MCF 10A (cell line): ENCODE measurements at regions of chr12 and their contacts with region 1.

Region 1: DNA sequence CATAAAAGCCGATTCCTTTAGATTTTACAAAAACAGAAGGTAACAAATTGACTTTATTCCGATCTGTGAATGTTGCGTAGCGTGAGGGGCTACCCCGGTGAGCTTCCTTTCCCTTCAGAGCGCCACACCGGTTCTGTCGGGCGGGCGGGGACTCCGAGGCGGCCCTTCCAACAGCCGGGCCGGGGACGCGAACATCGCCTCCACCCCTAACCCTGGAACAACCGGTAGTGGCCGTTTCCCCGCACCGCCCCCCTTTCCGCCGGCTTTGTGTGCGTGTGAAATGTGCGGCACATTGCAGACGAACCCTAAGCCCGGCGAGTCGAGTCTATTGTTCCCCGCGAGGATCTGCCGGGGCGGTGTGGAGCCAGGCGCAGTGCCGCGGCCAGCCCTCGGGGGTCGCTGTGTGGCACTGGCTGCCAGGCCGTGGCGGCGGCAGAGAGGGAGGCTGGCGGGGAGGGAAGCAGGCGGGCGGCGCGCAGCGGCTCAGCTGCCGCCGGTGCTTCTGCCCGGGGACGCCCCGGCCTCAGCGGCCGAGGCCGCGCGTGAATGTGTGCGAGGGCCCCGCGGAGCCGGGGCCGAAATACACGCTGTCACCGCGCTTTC is 775 bp upstream of the ARID2 start:
- DNase-seq: peak; percentile 95
- H3K4me3 Mint-ChIP-seq: peak overlapping the region; percentile 81
- H3K27ac Mint-ChIP-seq: peak overlapping the region; percentile 99
- H3K4me1 Mint-ChIP-seq: peaks cover 14% of the 10 kb centered on the region
- H3K27me3 Mint-ChIP-seq: no peaks in the 10 kb centered on the region
- CTCF ChIP-seq: peak; percentile 86

Region 2: DNA sequence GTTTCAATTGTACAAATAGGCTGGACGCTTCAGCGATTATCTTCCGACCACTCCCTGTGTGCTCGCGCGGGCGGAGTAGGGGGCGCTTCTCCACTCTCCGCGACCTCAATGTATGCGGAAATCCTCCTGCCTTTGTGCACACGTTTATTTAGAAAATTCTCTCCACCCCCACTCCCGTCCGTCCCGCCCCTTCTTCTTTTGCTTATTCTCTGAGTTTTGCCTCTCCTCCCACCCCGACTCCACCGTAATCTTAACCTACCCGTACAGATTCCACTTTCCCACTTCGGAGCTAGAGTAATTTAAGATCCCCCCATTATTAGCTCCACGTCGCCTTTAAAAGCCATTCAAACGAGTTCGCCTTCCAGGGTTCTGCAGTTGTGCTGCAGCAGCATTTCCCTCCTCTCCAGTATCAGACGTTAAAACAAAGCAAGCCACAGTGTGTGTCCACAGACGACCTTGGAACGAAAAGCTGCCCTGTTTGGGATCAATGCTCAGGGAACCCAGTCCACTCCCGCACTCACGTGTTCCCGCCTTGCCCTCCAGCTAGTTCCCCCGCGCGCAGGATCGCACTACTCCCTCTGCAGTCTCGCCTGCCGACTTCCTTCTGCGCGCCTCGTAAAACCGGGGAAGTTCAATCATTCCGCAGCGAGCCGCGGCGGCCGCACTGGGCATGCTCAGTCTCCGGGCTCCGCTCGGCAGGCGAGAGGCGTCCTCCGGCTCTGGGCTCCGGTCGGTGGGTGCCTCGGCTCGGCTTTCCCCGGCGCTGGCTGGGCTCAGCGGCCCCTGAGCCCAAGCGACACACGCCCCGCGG is 513.1 kb before region 1 on chr12 and contains the start of gene ANO6:
- CTCF ChIA-PET with region 1: interaction called, 11 read pairs
- POLR2A ChIA-PET with region 1: interaction called, 143 read pairs
- intact Hi-C with region 1: loop called (anchors 2 kb)
- DNase-seq: peak; percentile 88
- H3K4me3 Mint-ChIP-seq: peak within 1 kb of the TSS; percentile 89
- H3K27ac Mint-ChIP-seq: peak within 1 kb of the TSS; percentile 99
- H3K4me1 Mint-ChIP-seq: peaks cover 21% of the 10 kb centered on the region
- H3K27me3 Mint-ChIP-seq: no peaks in the 10 kb centered on the region
- CTCF ChIP-seq: no peak
- total RNA-seq, gene ANO6: 25.4 and 31.8 TPM in 2 replicates

Region 3: DNA sequence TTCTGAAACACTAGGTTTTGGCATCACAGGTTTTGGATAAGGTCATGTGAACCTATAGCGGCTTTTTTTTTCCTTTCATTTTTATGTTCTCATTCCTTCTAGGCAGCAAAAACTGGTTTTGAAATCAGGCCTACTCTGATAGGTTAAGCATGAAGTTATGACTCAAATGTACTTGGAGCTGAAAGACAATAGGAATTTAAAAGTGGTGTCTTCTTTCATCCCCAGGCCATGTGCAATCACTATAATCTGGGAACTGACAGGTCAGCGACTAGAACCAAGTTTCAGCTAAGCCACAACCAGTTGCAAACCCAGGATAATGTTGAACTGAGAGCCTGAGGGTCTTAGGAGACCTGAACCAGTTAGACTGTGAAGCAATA is 438.5 kb before region 1 on chr12:
- CTCF ChIA-PET with region 1: interaction called, 3 read pairs
- POLR2A ChIA-PET with region 1: interaction called, 11 read pairs
- intact Hi-C with region 1: no loop called
- DNase-seq: peak; percentile 94
- H3K4me3 Mint-ChIP-seq: peak overlapping the region; percentile 18
- H3K27ac Mint-ChIP-seq: peak overlapping the region; percentile 54
- H3K4me1 Mint-ChIP-seq: peaks cover 18% of the 10 kb centered on the region
- H3K27me3 Mint-ChIP-seq: no peaks in the 10 kb centered on the region
- CTCF ChIP-seq: no peak

Region 4: DNA sequence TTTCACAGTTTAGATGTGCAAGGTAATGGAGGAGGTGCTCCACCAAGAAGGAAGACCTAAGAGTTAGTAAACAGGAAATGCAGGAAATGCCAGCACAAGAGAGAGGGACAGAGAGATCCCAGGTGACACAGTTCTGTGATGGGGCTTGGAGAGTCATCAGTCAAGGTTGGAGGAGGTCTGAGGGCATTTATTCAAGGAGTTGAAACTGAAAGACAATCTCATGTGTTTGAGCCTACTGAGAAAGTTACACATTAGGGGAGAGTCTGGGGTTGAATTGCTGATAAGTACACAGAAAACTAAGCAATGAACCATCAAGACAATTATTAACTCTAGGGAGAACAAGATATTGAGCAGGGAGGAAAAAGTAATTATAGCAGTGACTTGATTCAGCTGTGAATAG is 374.3 kb before region 1 on chr12:
- CTCF ChIA-PET with region 1: no interaction called
- POLR2A ChIA-PET with region 1: no interaction called
- intact Hi-C with region 1: no loop called
- DNase-seq: no peak
- H3K4me3 Mint-ChIP-seq: no peak overlapping the region
- H3K27ac Mint-ChIP-seq: peak overlapping the region; percentile 24
- H3K4me1 Mint-ChIP-seq: peaks cover 5% of the 10 kb centered on the region
- H3K27me3 Mint-ChIP-seq: no peaks in the 10 kb centered on the region
- CTCF ChIP-seq: no peak

Region 5: GRCh38 chr12:45587877-45588533 is 140.7 kb before region 1 on chr12:
- CTCF ChIA-PET with region 1: interaction called, 3 read pairs
- POLR2A ChIA-PET with region 1: interaction called, 4 read pairs
- intact Hi-C with region 1: loop called (anchors 1 kb)
- DNase-seq: peak; percentile 15
- H3K4me3 Mint-ChIP-seq: no peak overlapping the region
- H3K27ac Mint-ChIP-seq: no peak overlapping the region
- H3K4me1 Mint-ChIP-seq: no peaks in the 10 kb centered on the region
- H3K27me3 Mint-ChIP-seq: no peaks in the 10 kb centered on the region
- CTCF ChIP-seq: no peak

Region 6: GRCh38 chr12:45745861-45746277 is 17.1 kb after region 1 on chr12:
- CTCF ChIA-PET with region 1: interaction called, 10 read pairs
- POLR2A ChIA-PET with region 1: interaction called, 74 read pairs
- intact Hi-C with region 1: no loop called
- DNase-seq: peak; percentile 27
- H3K4me3 Mint-ChIP-seq: no peak overlapping the region
- H3K27ac Mint-ChIP-seq: no peak overlapping the region
- H3K4me1 Mint-ChIP-seq: no peaks in the 10 kb centered on the region
- H3K27me3 Mint-ChIP-seq: no peaks in the 10 kb centered on the region
- CTCF ChIP-seq: peak; percentile 19

Region 7: DNA sequence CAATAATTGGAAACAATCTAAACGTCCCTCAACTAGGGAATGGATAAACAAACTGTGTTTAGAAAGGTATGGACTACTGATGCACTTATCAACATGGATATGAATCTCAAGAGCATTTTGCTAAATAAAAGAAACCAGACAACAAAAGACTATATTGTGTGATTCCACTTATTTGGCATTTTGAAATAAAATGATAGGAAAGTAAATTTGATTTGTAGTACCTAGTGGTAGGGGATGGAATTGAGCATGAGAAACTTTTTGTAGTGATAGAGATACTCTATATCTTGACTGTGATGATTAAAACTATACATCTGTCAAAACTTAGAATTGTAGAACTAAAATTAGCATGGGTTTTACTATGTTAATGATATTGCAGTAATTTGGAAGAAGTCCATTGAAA is 87.9 kb after region 1 on chr12:
- CTCF ChIA-PET with region 1: no interaction called
- POLR2A ChIA-PET with region 1: no interaction called
- intact Hi-C with region 1: no loop called
- DNase-seq: no peak
- H3K4me3 Mint-ChIP-seq: no peak overlapping the region
- H3K27ac Mint-ChIP-seq: no peak overlapping the region
- H3K4me1 Mint-ChIP-seq: no peaks in the 10 kb centered on the region
- H3K27me3 Mint-ChIP-seq: no peaks in the 10 kb centered on the region
- CTCF ChIP-seq: no peak